HepG2 (cell line): ENCODE measurements at regions of chr12 and their contacts with region 1.

Region 1: GRCh38 chr12:104986022-104986941 is at the start of gene NOPCHAP1:
- DNase-seq: peak; percentile 81
- ATAC-seq: peak; percentile 99
- H3K4me3 ChIP-seq: peak within 1 kb of the TSS; percentile 78 to 96 (median 83)
- H3K27ac ChIP-seq: peak within 1 kb of the TSS; percentile 66
- H3K4me1 ChIP-seq: peaks cover 37% of the 10 kb centered on the region
- H3K27me3 ChIP-seq: no peaks in the 10 kb centered on the region
- CTCF ChIP-seq: no peak
- EP300 ChIP-seq: no peak
- POLR2A ChIP-seq: peak; percentile 86 to 97
- RAD21 ChIP-seq: no peak
- total RNA-seq, gene NOPCHAP1: 38.1 and 51.5 TPM in 2 replicates

Region 2: GRCh38 chr12:104381731-104382480 is 604.4 kb before region 1 on chr12:
- CTCF ChIA-PET with region 1: no interaction called
- POLR2A ChIA-PET with region 1: no interaction called
- in situ Hi-C with region 1: no loop called
- intact Hi-C with region 1: loop called (anchors 10 kb)
- DNase-seq: peak; percentile 48
- ATAC-seq: peak; percentile 94
- H3K4me3 ChIP-seq: no peak overlapping the region
- H3K27ac ChIP-seq: no peak overlapping the region
- H3K4me1 ChIP-seq: no peaks in the 10 kb centered on the region
- H3K27me3 ChIP-seq: no peaks in the 10 kb centered on the region; a peak in 1 of 5 replicates
- CTCF ChIP-seq: peak; percentile 90
- EP300 ChIP-seq: no peak
- POLR2A ChIP-seq: no peak
- RAD21 ChIP-seq: peak; percentile 78

Region 3: GRCh38 chr12:104958009-104958945 is 28.0 kb before region 1 on chr12 and contains the start of gene SLC41A2:
- CTCF ChIA-PET with region 1: no interaction called
- POLR2A ChIA-PET with region 1: interaction called, 5 read pairs
- in situ Hi-C with region 1: no loop called
- intact Hi-C with region 1: loop called (anchors 1 kb)
- DNase-seq: peak; percentile 79
- ATAC-seq: peak; percentile 82
- H3K4me3 ChIP-seq: peak within 1 kb of the TSS; percentile 69 to 87 (median 78)
- H3K27ac ChIP-seq: peak within 1 kb of the TSS; percentile 65
- H3K4me1 ChIP-seq: peaks cover 31% of the 10 kb centered on the region
- H3K27me3 ChIP-seq: no peaks in the 10 kb centered on the region; a peak in 3 of 5 replicates
- CTCF ChIP-seq: peak; percentile 22; the same call in 1 of the 2 replicates
- EP300 ChIP-seq: no peak
- POLR2A ChIP-seq: peak; percentile 56 to 69; a peak in 3 of 4 replicates
- RAD21 ChIP-seq: no peak
- total RNA-seq, gene SLC41A2: 12.8 and 14.7 TPM in 2 replicates

Region 4: DNA sequence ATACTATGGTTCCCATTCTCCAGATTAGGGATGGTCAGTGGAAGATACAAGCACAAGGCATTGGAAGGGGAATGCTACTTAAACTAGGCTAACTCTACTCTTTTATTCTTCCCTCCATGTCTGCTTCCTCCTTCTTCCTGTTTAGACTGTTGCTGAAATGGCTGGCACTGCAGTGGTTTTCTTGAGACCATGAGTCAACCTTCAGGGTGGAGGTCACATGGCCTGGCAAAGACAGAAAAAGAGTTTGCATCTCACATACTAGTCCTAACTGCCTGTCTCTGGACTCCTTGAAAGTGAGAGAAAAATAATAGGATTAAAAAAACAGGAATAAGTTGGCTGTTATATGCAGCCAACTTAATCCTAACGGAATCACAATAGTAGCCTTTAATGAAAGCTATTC is 61.0 kb after region 1 on chr12:
- CTCF ChIA-PET with region 1: no interaction called
- POLR2A ChIA-PET with region 1: no interaction called
- in situ Hi-C with region 1: loop called (anchors 5 kb)
- intact Hi-C with region 1: no loop called
- DNase-seq: no peak
- ATAC-seq: no peak
- H3K4me3 ChIP-seq: no peak overlapping the region
- H3K27ac ChIP-seq: no peak overlapping the region
- H3K4me1 ChIP-seq: no peaks in the 10 kb centered on the region
- H3K27me3 ChIP-seq: no peaks in the 10 kb centered on the region
- CTCF ChIP-seq: no peak
- EP300 ChIP-seq: no peak
- POLR2A ChIP-seq: no peak
- RAD21 ChIP-seq: no peak

Region 5: GRCh38 chr12:105053116-105053572 is 66.9 kb after region 1 on chr12:
- CTCF ChIA-PET with region 1: interaction called, 4 read pairs
- POLR2A ChIA-PET with region 1: no interaction called
- in situ Hi-C with region 1: loop called (anchors 5 kb)
- intact Hi-C with region 1: loop called (anchors 1 kb)
- DNase-seq: peak; percentile 66
- ATAC-seq: peak; percentile 64
- H3K4me3 ChIP-seq: no peak overlapping the region
- H3K27ac ChIP-seq: no peak overlapping the region
- H3K4me1 ChIP-seq: no peaks in the 10 kb centered on the region
- H3K27me3 ChIP-seq: no peaks in the 10 kb centered on the region
- CTCF ChIP-seq: peak; percentile 88
- EP300 ChIP-seq: no peak
- POLR2A ChIP-seq: no peak
- RAD21 ChIP-seq: peak; percentile 69

Region 6: DNA sequence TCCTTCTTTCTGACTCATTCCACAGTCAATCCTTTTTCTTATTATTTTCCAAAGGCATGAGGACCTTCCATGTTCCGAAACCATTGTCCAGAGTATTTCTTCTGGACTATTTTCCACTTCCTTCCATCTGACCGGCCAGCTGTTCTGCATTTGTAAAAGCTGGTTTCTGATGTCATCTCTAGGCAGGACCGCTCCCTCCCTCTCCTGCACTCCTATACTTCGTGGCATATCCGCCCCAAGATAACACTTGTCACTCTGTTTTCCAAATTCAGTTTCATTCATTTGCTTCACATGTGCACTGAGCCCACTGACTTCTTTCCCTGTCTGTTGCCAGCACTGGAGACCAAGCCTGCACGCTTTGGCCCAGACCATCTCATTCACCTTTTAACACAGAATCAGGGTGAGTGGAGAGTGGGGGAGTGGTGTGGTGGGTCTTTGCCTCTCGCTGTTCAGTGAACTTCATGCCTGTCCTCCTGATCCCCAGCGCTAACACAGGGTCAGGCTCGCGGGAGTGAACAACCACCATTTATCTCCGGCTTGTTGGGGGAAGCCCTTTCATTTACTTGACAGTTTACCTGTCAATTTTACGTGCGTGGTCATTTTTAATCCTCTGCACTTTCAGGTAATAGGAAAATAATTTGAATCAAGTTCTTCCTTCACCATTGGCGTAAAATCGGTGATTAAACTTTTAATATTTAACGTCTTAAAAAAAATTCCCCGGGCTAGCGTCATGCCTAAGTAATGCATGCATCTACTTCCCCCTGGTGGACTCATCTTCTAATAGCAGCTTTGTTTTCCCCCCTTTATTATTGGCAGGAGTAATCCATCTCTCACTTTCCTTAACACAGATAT is 396.7 kb after region 1 on chr12:
- CTCF ChIA-PET with region 1: no interaction called
- POLR2A ChIA-PET with region 1: no interaction called
- in situ Hi-C with region 1: loop called (anchors 25 kb)
- intact Hi-C with region 1: no loop called
- DNase-seq: peak; percentile 55
- ATAC-seq: peak; percentile 77
- H3K4me3 ChIP-seq: peak overlapping the region in 2 of 3 experiments; percentile 26 to 50; a peak in 3 of 6 replicates
- H3K27ac ChIP-seq: no peak overlapping the region
- H3K4me1 ChIP-seq: peaks cover 7% of the 10 kb centered on the region
- H3K27me3 ChIP-seq: no peaks in the 10 kb centered on the region
- CTCF ChIP-seq: peak; percentile 78
- EP300 ChIP-seq: no peak
- POLR2A ChIP-seq: no peak
- RAD21 ChIP-seq: peak; percentile 78